Transverse colon (tissue), 4 donors: ENCODE measurements at regions of chr11 and their contacts with region 1.

Region 1: DNA sequence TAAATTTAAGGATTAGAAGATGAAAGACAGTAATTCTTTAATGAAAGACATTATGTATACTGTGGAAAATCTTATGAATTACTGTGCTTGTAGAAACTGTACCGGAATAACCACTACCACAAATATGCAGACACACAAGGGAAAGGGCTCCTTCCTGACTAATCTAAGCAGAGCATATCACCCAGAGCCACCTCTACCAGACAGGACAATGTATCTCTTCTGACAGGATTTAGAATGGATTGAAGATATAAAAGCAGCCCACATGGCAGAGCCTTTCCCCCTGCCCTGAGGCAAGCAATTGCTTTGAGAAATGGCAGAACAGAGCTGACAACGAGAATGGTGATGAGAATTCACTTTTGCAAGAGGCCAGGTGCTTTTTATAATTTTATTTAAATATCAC is 144.1 kb downstream of the NOX4 start:
- DNase-seq: no peak
- H3K4me3 ChIP-seq: no peak overlapping the region
- H3K27ac ChIP-seq: no peak overlapping the region
- H3K4me1 ChIP-seq: no peaks in the 10 kb centered on the region
- H3K27me3 ChIP-seq: no peaks in the 10 kb centered on the region
- CTCF ChIP-seq: no peak
- EP300 ChIP-seq: no peak
- POLR2A ChIP-seq: no peak

Region 2: DNA sequence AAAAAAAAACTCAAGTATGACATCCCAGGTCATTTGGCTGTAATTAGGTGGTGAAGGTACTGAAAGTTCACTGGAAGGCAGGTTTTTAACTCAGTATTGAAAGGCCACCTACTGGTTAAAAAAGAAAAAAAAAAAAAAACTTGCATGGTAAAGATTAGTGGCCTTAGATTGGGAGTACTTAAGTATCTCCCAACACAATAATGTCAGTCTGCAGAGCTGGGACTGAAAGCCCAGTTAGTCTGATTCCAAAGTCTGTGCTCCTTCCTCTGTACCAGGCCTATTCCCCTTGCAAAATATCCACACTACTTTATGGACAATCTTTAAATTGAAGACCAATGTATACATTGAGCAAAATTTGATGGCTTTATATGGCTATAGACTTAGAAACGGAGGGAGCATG is 58.6 kb after region 1 on chr11:
- in situ Hi-C with region 1: no loop called
- intact Hi-C with region 1: loop called (anchors 2 kb)
- DNase-seq: no peak
- H3K4me3 ChIP-seq: no peak overlapping the region
- H3K27ac ChIP-seq: no peak overlapping the region
- H3K4me1 ChIP-seq: no peaks in the 10 kb centered on the region
- H3K27me3 ChIP-seq: no peaks in the 10 kb centered on the region
- CTCF ChIP-seq: peak in 2 of 5 experiments; percentile 3 to 18
- EP300 ChIP-seq: no peak
- POLR2A ChIP-seq: no peak